CD8-positive, alpha-beta T cell (primary cell): ENCODE measurements at regions of chr1 and their contacts with region 1.

Region 1: DNA sequence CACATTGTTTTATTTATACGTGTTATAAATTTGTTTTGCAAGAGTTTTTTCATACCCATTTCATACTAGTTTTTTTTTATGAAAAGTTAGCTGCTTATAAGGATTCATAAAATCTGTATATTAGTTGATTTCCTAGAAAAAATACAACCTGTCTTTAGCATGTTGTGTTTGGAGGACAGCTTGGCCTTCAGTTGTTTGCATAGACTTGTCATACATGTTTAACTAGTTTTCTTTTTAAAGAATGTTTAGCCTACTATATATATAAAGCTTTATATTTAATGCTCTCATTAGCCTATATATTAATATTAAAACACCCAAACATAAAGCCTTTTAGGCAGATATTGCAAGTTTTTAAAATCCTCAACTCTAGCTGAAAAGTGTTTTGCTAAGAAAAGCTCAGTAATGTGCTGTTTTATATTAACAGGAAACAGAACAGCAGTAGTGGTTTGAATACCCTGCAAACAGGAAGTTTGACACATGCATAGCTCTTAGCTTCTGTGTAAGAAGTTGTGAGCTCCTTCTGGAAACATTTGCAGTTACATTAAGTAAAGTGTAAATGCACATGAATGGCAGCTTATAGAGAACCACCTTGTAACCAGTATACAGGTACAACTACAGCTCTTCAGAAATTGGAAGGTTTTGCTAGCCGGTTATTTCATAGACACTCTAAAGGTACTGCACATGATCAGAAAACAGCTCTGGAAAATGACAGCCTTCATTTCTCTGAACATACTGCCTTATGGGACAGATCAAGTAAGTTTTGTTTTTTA is at the start of gene PRKACB:
- DNase-seq: peak in 4 of 9 experiments; percentile 5 to 82 (median 36)
- ATAC-seq: peak; percentile 88
- H3K4me3 ChIP-seq: peak within 1 kb of the TSS; percentile 61 to 65
- H3K4me3 Mint-ChIP-seq: peak within 1 kb of the TSS; percentile 97
- H3K27ac ChIP-seq: peak within 1 kb of the TSS; percentile 59 to 82
- H3K27ac Mint-ChIP-seq: peak within 1 kb of the TSS; percentile 100
- H3K4me1 ChIP-seq: peaks cover 41% of the 10 kb centered on the region
- H3K4me1 Mint-ChIP-seq: peaks cover 45% of the 10 kb centered on the region
- H3K27me3 ChIP-seq: no peaks in the 10 kb centered on the region
- H3K27me3 Mint-ChIP-seq: no peaks in the 10 kb centered on the region
- CTCF ChIP-seq: no peak
- total RNA-seq, gene PRKACB: 50.9 to 55.8 TPM

Region 2: DNA sequence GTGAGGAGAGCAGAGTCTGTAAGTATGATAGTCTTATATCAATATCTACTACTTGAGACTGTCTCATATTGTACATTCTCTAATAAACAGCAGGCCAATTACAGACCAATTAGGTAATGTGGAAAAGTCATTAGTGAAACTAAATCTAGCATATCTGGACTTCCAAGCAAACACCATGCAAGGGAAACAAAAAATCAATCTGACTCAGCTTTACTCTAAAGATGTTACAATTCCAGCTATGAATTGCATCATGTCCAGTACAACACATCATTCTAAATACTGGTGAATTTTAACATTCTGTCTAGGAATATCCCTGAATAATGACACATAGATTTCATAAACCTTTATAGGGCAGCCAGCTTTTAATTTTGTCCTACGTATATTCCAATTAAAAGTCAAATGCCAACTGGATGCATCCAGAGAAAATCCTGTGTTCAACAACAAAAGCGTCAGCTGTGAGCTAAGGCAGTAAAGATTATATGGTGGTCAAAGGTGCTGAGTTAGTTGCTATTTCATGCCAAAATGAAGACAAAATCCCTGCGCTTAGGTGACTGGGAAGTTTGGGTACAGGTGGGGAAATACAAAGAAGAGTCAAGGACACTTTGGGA is 304.3 kb before region 1 on chr1:
- CTCF ChIA-PET with region 1: no interaction called
- POLR2A ChIA-PET with region 1: no interaction called
- intact Hi-C with region 1: no loop called
- DNase-seq: no peak
- ATAC-seq: no peak
- H3K4me3 ChIP-seq: no peak overlapping the region
- H3K4me3 Mint-ChIP-seq: no peak overlapping the region
- H3K27ac ChIP-seq: no peak overlapping the region
- H3K27ac Mint-ChIP-seq: no peak overlapping the region
- H3K4me1 ChIP-seq: no peaks in the 10 kb centered on the region
- H3K4me1 Mint-ChIP-seq: no peaks in the 10 kb centered on the region
- H3K27me3 ChIP-seq: no peaks in the 10 kb centered on the region
- H3K27me3 Mint-ChIP-seq: no peaks in the 10 kb centered on the region
- CTCF ChIP-seq: no peak

Region 3: GRCh38 chr1:84156210-84156621 is 12.2 kb after region 1 on chr1:
- CTCF ChIA-PET with region 1: interaction called, 5 read pairs
- POLR2A ChIA-PET with region 1: interaction called, 6 read pairs
- intact Hi-C with region 1: loop called in 1 of 2 experiments (anchors 1 kb)
- DNase-seq: peak in 1 of 9 experiments; percentile 56
- ATAC-seq: peak; percentile 64
- H3K4me3 ChIP-seq: no peak overlapping the region
- H3K4me3 Mint-ChIP-seq: peak overlapping the region; percentile 19
- H3K27ac ChIP-seq: peak overlapping the region in 1 of 2 experiments; percentile 17
- H3K27ac Mint-ChIP-seq: peak overlapping the region; percentile 60
- H3K4me1 ChIP-seq: peaks cover 72% of the 10 kb centered on the region
- H3K4me1 Mint-ChIP-seq: peaks cover 93% of the 10 kb centered on the region
- H3K27me3 ChIP-seq: no peaks in the 10 kb centered on the region
- H3K27me3 Mint-ChIP-seq: no peaks in the 10 kb centered on the region
- CTCF ChIP-seq: no peak

Region 4: GRCh38 chr1:84298328-84298683 is 154.3 kb after region 1 on chr1:
- CTCF ChIA-PET with region 1: interaction called, 4 read pairs
- POLR2A ChIA-PET with region 1: interaction called, 17 read pairs
- intact Hi-C with region 1: loop called in 1 of 2 experiments (anchors 1 kb)
- DNase-seq: peak; percentile 12 to 75 (median 41)
- ATAC-seq: peak; percentile 70
- H3K4me3 ChIP-seq: peak overlapping the region; percentile 76 to 94
- H3K4me3 Mint-ChIP-seq: peak overlapping the region; percentile 78
- H3K27ac ChIP-seq: peak overlapping the region; percentile 8 to 53
- H3K27ac Mint-ChIP-seq: peak overlapping the region; percentile 46
- H3K4me1 ChIP-seq: peaks cover 17% of the 10 kb centered on the region
- H3K4me1 Mint-ChIP-seq: peaks cover 37% of the 10 kb centered on the region
- H3K27me3 ChIP-seq: no peaks in the 10 kb centered on the region
- H3K27me3 Mint-ChIP-seq: peaks cover 5% of the 10 kb centered on the region
- CTCF ChIP-seq: no peak

Region 5: GRCh38 chr1:84442256-84442655 is 298.3 kb after region 1 on chr1:
- CTCF ChIA-PET with region 1: interaction called, 144 read pairs
- POLR2A ChIA-PET with region 1: interaction called, 38 read pairs
- intact Hi-C with region 1: no loop called
- DNase-seq: peak in 3 of 9 experiments; percentile 10 to 90 (median 83)
- ATAC-seq: peak; percentile 96
- H3K4me3 ChIP-seq: no peak overlapping the region
- H3K4me3 Mint-ChIP-seq: no peak overlapping the region
- H3K27ac ChIP-seq: no peak overlapping the region
- H3K27ac Mint-ChIP-seq: no peak overlapping the region
- H3K4me1 ChIP-seq: peaks cover 20% of the 10 kb centered on the region
- H3K4me1 Mint-ChIP-seq: peaks cover 15% of the 10 kb centered on the region
- H3K27me3 ChIP-seq: no peaks in the 10 kb centered on the region
- H3K27me3 Mint-ChIP-seq: peaks cover 4% of the 10 kb centered on the region
- CTCF ChIP-seq: peak; percentile 53

Region 6: DNA sequence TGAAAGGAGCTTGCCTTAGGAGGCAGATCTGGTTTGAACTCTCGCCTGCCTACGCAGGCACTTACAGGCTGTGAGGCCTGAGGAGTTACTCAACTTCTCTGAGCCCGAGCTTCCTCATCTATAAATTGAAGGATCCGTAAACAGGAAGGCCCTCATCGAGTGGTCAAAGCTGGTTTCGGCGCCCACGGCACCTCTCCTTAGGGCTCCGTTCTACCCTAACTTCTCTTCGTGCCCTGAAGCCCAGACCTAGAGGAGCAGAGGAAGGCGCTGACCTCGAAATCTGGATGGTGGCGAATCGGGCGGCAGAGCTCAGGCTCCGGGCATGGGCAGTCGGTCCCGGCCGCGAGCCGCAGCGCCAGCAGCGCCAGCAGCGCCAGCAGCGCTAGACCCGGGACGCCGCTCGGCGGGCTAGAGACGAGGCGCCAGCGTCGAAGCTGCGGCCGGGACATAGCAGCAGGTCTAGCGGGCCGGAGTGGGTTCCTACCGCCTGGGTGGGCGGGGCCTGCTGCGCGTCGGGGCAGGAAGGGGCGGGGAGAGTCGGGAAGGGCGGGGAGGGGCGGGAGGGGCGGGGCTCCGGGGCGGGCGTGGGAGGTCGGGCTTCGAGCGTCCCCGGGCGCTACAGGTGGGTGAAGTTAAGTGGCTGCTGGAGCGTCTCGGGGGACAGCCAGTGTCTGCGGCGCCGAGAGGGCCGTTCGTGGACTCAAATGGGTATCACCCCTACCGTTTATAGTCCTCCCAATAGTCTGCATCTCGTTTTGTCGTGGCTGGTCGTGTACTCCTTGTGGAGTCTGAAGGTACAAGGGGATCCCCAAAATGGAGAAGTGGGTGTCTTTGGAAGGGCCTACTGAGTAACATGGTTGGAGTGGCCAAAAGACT is 430.2 kb after region 1 on chr1 and contains the start of gene CTBS:
- CTCF ChIA-PET with region 1: interaction called, 5 read pairs
- POLR2A ChIA-PET with region 1: interaction called, 20 read pairs
- intact Hi-C with region 1: loop called in 1 of 2 experiments (anchors 1 kb)
- DNase-seq: peak; percentile 67 to 93 (median 85)
- ATAC-seq: peak; percentile 91
- H3K4me3 ChIP-seq: peak within 1 kb of the TSS; percentile 81 to 92
- H3K4me3 Mint-ChIP-seq: peak within 1 kb of the TSS; percentile 96
- H3K27ac ChIP-seq: peak within 1 kb of the TSS; percentile 94 to 96
- H3K27ac Mint-ChIP-seq: peak within 1 kb of the TSS; percentile 99
- H3K4me1 ChIP-seq: peaks cover 20% of the 10 kb centered on the region
- H3K4me1 Mint-ChIP-seq: peaks cover 42% of the 10 kb centered on the region
- H3K27me3 ChIP-seq: no peaks in the 10 kb centered on the region
- H3K27me3 Mint-ChIP-seq: no peaks in the 10 kb centered on the region
- CTCF ChIP-seq: no peak
- total RNA-seq, gene CTBS: 17.3 to 19.7 TPM

Region 7: DNA sequence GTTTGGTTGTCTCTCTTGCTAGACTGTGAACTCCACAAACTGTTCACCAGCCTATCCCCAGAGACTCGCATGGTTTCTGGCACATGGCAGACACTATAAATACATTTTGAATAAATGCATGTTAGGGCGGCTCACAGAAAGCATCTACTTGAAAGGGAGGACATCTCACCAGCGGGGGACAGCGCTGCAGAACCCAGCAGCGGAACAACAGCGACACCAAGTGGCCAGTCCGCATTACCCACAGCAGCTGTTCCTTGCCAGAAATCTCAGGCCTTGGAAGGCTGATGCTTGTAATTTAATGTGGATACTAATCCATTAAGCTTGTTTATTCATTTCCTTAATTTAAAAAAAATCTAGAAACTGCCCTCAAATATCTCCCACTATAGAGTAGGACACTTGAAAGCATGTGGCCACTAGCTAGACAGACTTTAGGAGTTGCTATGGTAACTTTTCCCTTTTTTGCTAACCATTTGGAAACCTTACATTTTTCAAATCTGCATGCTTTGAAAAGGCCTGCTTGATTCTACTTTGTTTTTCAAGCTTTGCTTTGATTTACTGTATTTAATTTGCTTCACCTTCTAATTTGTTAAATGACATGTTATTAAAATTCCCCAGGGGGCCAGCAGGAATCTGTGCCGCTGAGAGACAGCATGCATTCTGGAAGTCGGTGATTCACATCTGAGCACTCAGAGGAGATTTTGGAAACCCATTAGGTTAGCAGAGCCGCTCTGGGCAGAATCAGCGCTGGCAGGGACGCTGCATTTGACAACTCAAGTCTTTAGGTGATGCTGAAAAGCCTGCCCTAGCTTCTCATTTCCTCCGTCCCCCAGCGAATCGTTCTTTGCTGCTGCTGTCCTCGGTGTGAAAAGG is 609.8 kb after region 1 on chr1:
- CTCF ChIA-PET with region 1: interaction called, 20 read pairs
- POLR2A ChIA-PET with region 1: no interaction called
- intact Hi-C with region 1: loop called (anchors 1 kb)
- DNase-seq: peak; percentile 56 to 86 (median 73)
- ATAC-seq: peak; percentile 93
- H3K4me3 ChIP-seq: no peak overlapping the region
- H3K4me3 Mint-ChIP-seq: no peak overlapping the region
- H3K27ac ChIP-seq: no peak overlapping the region
- H3K27ac Mint-ChIP-seq: no peak overlapping the region
- H3K4me1 ChIP-seq: no peaks in the 10 kb centered on the region
- H3K4me1 Mint-ChIP-seq: no peaks in the 10 kb centered on the region
- H3K27me3 ChIP-seq: no peaks in the 10 kb centered on the region
- H3K27me3 Mint-ChIP-seq: peaks cover 19% of the 10 kb centered on the region
- CTCF ChIP-seq: peak; percentile 94

Region 8: DNA sequence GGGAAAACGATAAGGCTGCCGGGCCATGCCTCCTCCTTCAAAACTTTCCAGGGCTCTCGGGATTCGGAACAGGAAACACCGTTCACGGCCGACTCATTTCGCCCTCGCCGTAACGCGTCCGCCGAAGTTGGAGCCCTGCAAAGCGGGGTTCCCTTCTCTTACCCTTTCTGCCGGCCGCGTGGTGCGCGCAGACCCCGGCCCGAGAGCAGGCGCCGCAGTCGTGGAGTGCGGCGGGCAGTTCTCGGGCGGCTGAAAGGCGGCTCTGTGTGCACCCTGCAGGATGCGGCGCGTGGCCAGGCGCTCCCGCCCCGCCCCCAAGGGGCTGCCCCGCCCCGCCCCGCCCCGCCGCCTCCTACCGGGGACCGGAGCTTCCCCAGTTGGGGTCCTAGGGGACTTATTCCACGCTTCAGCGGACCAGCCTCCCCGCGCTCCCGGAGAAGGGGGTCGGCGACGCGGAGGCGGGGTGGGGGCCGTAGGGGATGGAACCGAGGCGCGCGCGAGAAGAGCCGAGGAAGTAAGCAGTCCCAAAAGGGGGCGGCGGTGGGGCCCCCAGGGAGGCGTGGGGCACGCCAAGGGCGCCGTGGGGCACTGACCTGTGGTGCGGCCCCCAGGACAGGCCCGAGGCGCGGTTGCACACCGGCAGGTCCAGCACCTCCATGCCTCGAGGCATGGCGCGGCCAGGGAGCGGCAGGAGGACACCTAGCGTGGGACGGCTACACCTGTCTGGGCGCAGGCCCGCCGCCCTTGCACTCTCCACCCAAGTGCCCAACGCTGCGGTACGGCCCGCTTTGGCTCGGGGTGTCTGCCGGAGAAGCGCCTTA is 853.1 kb after region 1 on chr1 and contains the start of gene MCOLN2:
- CTCF ChIA-PET with region 1: no interaction called
- POLR2A ChIA-PET with region 1: no interaction called
- intact Hi-C with region 1: loop called in 1 of 2 experiments (anchors 5 kb)
- DNase-seq: peak; percentile 16 to 77 (median 51)
- ATAC-seq: peak; percentile 69
- H3K4me3 ChIP-seq: peak within 1 kb of the TSS; percentile 66 to 84
- H3K4me3 Mint-ChIP-seq: peak within 1 kb of the TSS; percentile 84
- H3K27ac ChIP-seq: peak within 1 kb of the TSS; percentile 28 to 81
- H3K27ac Mint-ChIP-seq: peak within 1 kb of the TSS; percentile 57
- H3K4me1 ChIP-seq: peaks cover 20% of the 10 kb centered on the region
- H3K4me1 Mint-ChIP-seq: peaks cover 34% of the 10 kb centered on the region
- H3K27me3 ChIP-seq: no peaks in the 10 kb centered on the region
- H3K27me3 Mint-ChIP-seq: peaks cover 23% of the 10 kb centered on the region
- CTCF ChIP-seq: no peak
- total RNA-seq, gene MCOLN2: 12.7 to 23.1 TPM